ENCODE measurements at regions of chr7 and their contacts with region 1.

Region 1: DNA sequence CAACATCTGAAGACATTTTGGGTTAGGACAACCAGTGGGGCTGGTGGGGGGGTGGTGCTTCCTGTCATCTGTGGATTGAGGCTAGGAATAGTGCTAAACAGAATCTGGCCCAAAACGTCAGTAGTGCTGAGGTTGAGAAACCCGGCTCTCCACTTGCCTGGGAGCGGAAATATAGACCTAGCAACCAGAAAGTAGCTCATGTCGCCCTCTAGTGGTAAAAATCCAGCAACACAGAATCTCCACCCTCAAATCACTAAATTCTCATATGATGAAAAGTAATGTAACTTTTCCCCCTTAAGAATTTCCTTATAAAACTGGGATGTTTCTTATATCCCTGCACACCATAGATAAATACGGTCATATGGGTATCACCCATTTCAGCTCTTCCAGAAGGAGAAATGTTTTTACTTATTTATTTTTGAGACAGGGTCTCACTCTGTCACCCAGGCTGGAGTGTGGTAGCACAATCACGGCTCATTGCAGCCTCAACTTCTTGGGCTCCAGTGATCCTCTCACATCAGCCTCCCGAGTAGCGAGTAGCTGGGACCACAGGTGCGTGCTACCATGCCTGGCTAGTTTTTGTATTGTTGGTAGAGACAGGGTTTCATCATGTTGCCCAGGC is 34.4 kb downstream of the ZC3HAV1 start:
- DNase-seq: peak; percentile 71 to 81
- H3K4me3 ChIP-seq: no peak overlapping the region
- H3K27ac ChIP-seq: peak overlapping the region; percentile 31 to 53
- H3K4me1 ChIP-seq: peaks cover 0 to 3% (median 1%) of the 10 kb centered on the region in 4 donors
- H3K27me3 ChIP-seq: no peaks in the 10 kb centered on the region
- CTCF ChIP-seq: peak; percentile 69 to 84

Region 2: GRCh38 chr7:138865843-138866242 is 209.3 kb before region 1 on chr7:
- intact Hi-C with region 1: no loop called
- DNase-seq: no peak
- H3K4me3 ChIP-seq: no peak overlapping the region
- H3K27ac ChIP-seq: no peak overlapping the region
- H3K4me1 ChIP-seq: no peaks in the 10 kb centered on the region
- H3K27me3 ChIP-seq: no peaks in the 10 kb centered on the region
- CTCF ChIP-seq: no peak

Region 3: DNA sequence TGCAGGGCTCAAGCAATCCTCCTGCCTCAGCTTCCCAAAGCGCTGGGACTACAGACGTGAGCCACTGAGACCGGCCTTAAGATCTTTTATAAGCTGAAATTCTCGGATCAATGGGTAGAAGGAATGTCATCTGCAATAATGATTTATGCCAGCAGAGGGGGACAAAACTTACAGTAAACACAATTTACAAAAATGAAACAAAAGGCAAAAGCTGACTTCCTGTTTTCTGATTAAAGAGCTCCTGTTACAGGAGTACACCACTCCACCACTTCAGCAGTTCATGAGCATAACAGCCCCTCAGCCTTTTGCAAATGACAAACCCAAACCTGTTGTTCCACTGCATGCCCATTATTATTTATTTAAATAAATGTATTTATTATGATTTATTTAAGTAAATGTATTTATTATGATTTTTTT is 188.6 kb before region 1 on chr7:
- intact Hi-C with region 1: loop called (anchors 10 kb)
- DNase-seq: no peak
- H3K4me3 ChIP-seq: no peak overlapping the region
- H3K27ac ChIP-seq: no peak overlapping the region
- H3K4me1 ChIP-seq: no peaks in the 10 kb centered on the region
- H3K27me3 ChIP-seq: no peaks in the 10 kb centered on the region
- CTCF ChIP-seq: peak; percentile 42 to 49

Region 4: DNA sequence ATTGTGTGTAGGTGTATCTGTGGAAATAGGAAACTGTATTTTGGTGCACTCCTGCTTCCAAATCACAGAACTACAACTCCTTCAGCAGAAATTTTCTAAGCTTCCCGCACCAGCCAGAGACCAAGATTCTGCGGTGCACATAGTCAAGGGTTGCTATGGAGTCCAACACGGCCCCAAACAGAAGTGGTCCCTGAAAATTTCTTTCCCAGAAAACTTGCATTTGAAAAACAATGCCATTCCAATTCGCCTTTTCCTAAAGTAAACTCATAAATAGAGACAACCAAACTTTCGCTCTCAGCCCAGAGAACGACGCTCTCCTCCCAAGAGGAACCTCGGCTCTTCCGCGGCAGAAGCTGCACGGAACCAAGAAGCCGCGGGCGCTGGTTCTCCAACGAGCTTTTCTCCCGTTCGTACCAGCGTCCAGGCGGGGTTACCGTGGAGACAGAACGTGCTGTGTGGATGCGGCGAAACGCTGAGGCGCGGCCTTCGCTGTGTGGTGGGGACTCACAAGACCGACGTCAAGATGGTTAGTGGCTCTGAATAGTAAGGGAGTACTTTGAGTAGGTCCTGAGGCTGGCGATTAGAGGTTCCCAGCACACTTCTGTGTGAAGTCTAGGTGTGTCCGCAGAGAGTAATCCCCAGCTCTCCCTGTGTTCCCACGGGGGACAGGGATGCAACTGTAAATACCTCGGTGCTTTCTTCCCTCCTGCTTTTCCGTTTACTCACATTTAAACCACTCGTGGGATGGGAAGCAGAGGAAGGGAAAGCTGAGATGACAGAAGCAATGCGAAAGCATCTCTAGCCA is 58.4 kb after region 1 on chr7:
- intact Hi-C with region 1: no loop called
- DNase-seq: peak; percentile 82 to 88
- H3K4me3 ChIP-seq: peak overlapping the region; percentile 53 to 54
- H3K27ac ChIP-seq: peak overlapping the region; percentile 52 to 57
- H3K4me1 ChIP-seq: peaks cover 0 to 9% (median 7%) of the 10 kb centered on the region in 4 donors
- H3K27me3 ChIP-seq: no peaks in the 10 kb centered on the region
- CTCF ChIP-seq: no peak

Region 5: GRCh38 chr7:139557857-139558581 is 482.9 kb after region 1 on chr7:
- intact Hi-C with region 1: no loop called
- DNase-seq: no peak
- H3K4me3 ChIP-seq: no peak overlapping the region
- H3K27ac ChIP-seq: no peak overlapping the region
- H3K4me1 ChIP-seq: no peaks in the 10 kb centered on the region
- H3K27me3 ChIP-seq: peaks cover 0 to 4% of the 10 kb centered on the region in 2 donors
- CTCF ChIP-seq: no peak